ENCODE measurements at regions of chr19 and their contacts with region 1.

Region 1: GRCh38 chr19:38538793-38539528 is 78.8 kb downstream of the MAP4K1 start:
- DNase-seq: no peak
- ATAC-seq: no peak
- H3K4me3 ChIP-seq: no peak overlapping the region
- H3K27ac ChIP-seq: no peak overlapping the region
- H3K4me1 ChIP-seq: peaks cover 5% of the 10 kb centered on the region
- H3K27me3 ChIP-seq: peaks cover 11% of the 10 kb centered on the region
- CTCF ChIP-seq: no peak

Region 2: DNA sequence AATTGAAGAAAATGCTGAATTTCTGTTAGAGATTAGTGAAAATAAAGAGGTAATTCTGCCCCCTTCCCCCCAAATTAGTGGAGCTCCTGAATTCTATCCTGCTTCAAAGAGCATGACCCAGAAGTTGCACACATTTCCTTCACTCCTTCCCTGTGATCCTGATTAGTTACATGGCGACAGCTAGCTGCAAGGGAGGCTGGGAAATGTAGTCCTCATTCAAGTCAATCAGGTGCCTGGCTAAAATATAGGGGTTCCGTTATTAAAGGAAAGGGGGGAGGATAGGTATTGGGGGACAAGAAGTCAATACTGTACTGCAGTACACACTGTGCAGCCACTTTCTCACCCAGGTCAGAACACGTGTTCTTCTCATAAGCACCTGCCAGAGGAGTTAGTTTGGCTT is 566.2 kb before region 1 on chr19:
- CTCF ChIA-PET with region 1: no interaction called
- POLR2A ChIA-PET with region 1: interaction called, 13 read pairs
- in situ Hi-C with region 1: no loop called
- intact Hi-C with region 1: no loop called
- DNase-seq: no peak
- ATAC-seq: no peak
- H3K4me3 ChIP-seq: no peak overlapping the region
- H3K27ac ChIP-seq: no peak overlapping the region
- H3K4me1 ChIP-seq: no peaks in the 10 kb centered on the region
- H3K27me3 ChIP-seq: no peaks in the 10 kb centered on the region
- CTCF ChIP-seq: no peak

Region 3: GRCh38 chr19:38844093-38844686 is 305.2 kb after region 1 on chr19:
- CTCF ChIA-PET with region 1: no interaction called
- POLR2A ChIA-PET with region 1: interaction called, 11 read pairs
- in situ Hi-C with region 1: no loop called
- intact Hi-C with region 1: no loop called
- DNase-seq: no peak
- ATAC-seq: no peak
- H3K4me3 ChIP-seq: no peak overlapping the region
- H3K27ac ChIP-seq: peak overlapping the region; percentile 10
- H3K4me1 ChIP-seq: peaks cover 81% of the 10 kb centered on the region
- H3K27me3 ChIP-seq: no peaks in the 10 kb centered on the region
- CTCF ChIP-seq: no peak